ENCODE measurements at regions of chr1 and their contacts with region 1.

Region 1: DNA sequence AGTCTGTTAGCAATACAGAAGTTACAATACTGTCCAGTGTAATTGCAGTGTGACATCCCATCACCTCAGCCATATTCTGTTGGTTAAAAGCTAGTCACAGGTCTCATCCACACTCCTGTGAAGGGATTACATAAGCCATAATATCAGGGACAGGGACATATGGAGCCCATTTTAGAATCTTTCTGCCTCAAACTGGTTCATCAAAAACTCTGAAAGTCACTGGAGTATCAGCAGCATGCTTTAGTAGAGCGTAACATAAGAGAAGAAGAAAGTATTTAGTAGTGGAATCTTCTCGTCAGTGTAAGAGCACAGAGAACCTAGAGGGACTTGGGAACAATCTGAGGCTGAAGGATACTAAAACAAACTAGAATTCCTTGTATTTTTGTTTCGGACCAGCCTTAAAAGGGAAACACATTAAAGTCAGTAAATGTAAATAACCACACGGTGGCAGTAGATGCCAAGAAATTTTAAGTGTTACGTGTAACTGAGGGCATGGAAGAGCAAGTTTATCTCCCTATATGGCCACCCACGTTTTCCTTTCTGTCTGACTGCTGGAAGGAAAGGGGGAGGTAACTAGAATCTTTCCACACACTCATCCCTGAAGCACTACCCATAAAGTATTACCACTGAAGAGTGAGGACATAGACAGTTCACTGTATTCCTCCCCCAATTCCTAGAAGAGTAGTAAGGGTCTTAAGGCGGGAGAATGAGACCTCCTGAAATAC is 41.6 kb upstream of the AGL start:
- DNase-seq: peak; percentile 85
- H3K4me3 Mint-ChIP-seq: peak overlapping the region; percentile 22
- H3K27ac Mint-ChIP-seq: no peak overlapping the region
- H3K4me1 Mint-ChIP-seq: peaks cover 18% of the 10 kb centered on the region
- H3K27me3 Mint-ChIP-seq: peaks cover 20% of the 10 kb centered on the region

Region 2: DNA sequence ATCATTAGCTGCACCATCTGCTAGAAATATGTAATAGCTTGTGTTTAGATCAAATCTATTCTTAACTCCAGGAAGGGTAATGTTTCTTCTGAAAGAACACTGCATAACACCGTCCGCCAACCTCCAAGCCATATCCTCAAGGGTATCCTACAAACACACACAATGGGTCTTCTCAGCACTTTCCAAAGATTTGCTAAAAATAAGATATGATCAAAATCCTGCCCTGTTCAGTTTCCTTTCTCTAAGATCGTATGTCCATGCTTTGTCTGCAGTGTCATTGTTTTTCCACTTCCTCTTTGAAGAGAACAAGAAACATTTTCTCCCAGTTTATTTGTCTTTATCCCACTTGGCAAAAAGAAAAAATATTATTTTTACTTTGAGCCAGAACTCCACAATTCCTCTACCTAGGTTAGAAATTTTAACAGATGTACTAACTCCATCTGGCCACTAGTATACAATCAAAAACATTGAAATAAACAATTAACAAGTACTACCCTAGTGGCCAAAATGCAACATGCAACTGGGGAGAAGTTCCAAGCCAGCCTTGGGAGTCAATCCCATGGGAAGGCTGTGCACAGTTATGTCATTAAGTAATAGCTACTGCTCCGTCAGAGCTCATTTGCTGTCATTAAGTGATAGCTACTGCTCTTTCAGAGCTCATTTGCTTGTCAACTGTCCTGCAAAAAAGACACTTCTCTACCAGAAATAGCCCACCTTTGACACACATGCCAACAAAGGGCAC is 79.9 kb before region 1 on chr1:
- intact Hi-C with region 1: no loop called
- DNase-seq: no peak
- H3K4me3 Mint-ChIP-seq: no peak overlapping the region
- H3K27ac Mint-ChIP-seq: no peak overlapping the region
- H3K4me1 Mint-ChIP-seq: no peaks in the 10 kb centered on the region
- H3K27me3 Mint-ChIP-seq: peaks cover 5% of the 10 kb centered on the region

Region 3: GRCh38 chr1:99849744-99850458 is 41.3 kb after region 1 on chr1 and contains the start of gene AGL:
- intact Hi-C with region 1: loop called (anchors 2 kb)
- DNase-seq: peak; percentile 96
- H3K4me3 Mint-ChIP-seq: peak within 1 kb of the TSS; percentile 97
- H3K27ac Mint-ChIP-seq: peak within 1 kb of the TSS; percentile 90
- H3K4me1 Mint-ChIP-seq: peaks cover 15% of the 10 kb centered on the region
- H3K27me3 Mint-ChIP-seq: peaks cover 5% of the 10 kb centered on the region
- total RNA-seq, gene AGL: 12.9 and 13.7 TPM in 2 replicates

Region 4: GRCh38 chr1:99969729-99970621 is 161.4 kb after region 1 on chr1 and contains the start of gene SLC35A3:
- intact Hi-C with region 1: loop called (anchors 5 kb)
- DNase-seq: peak; percentile 94
- H3K4me3 Mint-ChIP-seq: peak within 1 kb of the TSS; percentile 97
- H3K27ac Mint-ChIP-seq: peak within 1 kb of the TSS; percentile 98
- H3K4me1 Mint-ChIP-seq: peaks cover 16% of the 10 kb centered on the region
- H3K27me3 Mint-ChIP-seq: no peaks in the 10 kb centered on the region
- total RNA-seq, gene SLC35A3: 15.7 and 17.4 TPM in 2 replicates

Region 5: GRCh38 chr1:100265931-100266740 is 457.6 kb after region 1 on chr1 and contains the start of gene RTCA:
- intact Hi-C with region 1: loop called (anchors 1 kb)
- DNase-seq: peak; percentile 99
- H3K4me3 Mint-ChIP-seq: peak within 1 kb of the TSS; percentile 98
- H3K27ac Mint-ChIP-seq: peak within 1 kb of the TSS; percentile 96
- H3K4me1 Mint-ChIP-seq: peaks cover 34% of the 10 kb centered on the region
- H3K27me3 Mint-ChIP-seq: no peaks in the 10 kb centered on the region
- total RNA-seq, gene RTCA: 48.5 and 49.1 TPM in 2 replicates

Region 6: GRCh38 chr1:100543640-100544039 is 735.1 kb after region 1 on chr1:
- intact Hi-C with region 1: loop called (anchors 5 kb)
- DNase-seq: peak; percentile 77
- H3K4me3 Mint-ChIP-seq: no peak overlapping the region
- H3K27ac Mint-ChIP-seq: no peak overlapping the region
- H3K4me1 Mint-ChIP-seq: peaks cover 2% of the 10 kb centered on the region
- H3K27me3 Mint-ChIP-seq: peaks cover 45% of the 10 kb centered on the region

Region 7: DNA sequence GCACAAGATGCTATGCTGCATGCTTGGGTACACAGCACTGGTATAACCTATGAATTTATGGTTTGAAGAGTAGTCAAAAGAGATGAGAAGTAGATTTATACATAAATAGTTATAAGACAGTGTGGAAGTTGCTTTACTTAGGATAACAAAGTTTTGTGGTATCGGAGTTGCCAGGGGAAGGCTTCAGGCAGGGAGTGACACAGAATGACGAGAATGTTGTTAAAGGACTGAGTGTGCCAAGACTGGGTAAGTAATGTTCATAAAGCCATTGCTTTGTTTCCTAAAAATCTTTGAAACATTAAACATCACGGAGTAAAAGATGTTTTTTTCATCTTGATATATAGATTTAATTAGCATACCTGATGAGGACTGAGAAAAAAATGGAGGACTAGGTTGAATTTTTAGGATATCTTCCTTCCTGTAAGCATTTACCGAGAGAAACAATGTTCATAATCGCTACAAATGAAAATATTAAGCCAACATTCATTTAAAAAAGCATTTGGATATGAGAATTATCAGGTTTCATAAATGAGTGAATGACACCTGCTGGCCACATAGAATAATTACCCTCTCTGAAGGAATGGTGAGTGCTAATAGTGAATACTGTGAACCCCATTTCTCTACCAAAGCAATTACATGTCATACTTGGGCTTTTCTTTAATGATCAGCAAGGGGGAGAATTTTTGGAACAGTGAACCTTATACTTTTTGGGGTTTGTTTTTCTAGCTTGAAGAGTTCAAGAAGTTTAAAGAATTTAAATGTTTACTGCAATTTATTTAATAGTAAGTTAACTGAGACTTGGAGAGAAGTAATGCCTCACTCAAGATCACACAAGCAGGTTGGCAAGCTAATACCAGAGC is 1057.7 kb after region 1 on chr1:
- intact Hi-C with region 1: loop called (anchors 1 kb)
- DNase-seq: no peak
- H3K4me3 Mint-ChIP-seq: no peak overlapping the region
- H3K27ac Mint-ChIP-seq: no peak overlapping the region
- H3K4me1 Mint-ChIP-seq: no peaks in the 10 kb centered on the region
- H3K27me3 Mint-ChIP-seq: peaks cover 2% of the 10 kb centered on the region